ENCODE measurements at regions of chr4 and their contacts with region 1.

Region 1: DNA sequence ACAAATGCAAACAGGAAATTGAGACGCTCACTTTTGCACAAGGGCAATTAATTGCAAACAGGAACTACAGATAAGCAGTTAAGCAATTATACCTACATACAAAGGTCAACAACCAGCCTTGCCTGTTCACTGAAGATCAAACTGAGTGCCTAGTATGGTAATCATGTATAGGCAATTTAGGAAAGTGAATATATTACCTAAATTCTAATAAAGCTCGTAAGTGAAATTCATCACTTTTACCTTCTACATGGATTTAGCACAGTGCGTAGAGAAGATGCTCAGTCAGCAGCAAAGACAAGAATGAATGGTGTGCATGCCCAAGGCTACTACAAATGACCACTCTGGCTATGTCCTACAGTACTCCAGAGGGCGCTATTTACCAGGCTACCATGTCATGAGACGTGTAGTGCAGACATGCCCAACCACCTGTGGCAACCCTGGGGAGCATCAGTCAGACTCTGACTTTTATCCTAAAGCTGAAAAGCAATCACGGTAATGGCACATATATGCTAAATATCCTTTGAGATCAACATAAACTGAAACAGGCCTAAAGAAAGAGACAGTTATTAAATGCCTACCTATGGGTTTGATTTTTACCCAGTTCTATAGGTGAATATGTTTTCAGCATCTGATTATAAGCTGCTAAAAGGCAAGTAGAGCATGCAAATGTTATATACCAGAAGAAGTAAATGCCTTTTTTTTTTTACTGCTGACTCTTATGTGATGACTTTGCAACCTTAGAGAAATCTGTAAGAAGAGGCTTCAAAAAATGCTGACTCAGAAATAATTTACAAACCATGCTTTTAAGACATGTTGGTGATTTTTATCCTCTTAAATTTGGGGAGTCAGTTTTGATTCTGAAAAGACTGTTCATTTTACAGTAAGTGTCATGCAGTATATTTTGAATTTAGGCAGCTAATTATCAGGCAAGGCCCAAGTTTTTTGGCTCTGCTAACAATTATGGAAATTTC is 178.0 kb downstream of the PPP3CA start:
- DNase-seq: peak; percentile 28
- CTCF ChIP-seq: peak; percentile 73

Region 2: GRCh38 chr4:101187841-101188240 is 18.5 kb after region 1 on chr4:
- CTCF ChIA-PET with region 1: interaction called, 35 read pairs
- POLR2A ChIA-PET with region 1: no interaction called
- DNase-seq: no peak
- CTCF ChIP-seq: no peak

Region 3: DNA sequence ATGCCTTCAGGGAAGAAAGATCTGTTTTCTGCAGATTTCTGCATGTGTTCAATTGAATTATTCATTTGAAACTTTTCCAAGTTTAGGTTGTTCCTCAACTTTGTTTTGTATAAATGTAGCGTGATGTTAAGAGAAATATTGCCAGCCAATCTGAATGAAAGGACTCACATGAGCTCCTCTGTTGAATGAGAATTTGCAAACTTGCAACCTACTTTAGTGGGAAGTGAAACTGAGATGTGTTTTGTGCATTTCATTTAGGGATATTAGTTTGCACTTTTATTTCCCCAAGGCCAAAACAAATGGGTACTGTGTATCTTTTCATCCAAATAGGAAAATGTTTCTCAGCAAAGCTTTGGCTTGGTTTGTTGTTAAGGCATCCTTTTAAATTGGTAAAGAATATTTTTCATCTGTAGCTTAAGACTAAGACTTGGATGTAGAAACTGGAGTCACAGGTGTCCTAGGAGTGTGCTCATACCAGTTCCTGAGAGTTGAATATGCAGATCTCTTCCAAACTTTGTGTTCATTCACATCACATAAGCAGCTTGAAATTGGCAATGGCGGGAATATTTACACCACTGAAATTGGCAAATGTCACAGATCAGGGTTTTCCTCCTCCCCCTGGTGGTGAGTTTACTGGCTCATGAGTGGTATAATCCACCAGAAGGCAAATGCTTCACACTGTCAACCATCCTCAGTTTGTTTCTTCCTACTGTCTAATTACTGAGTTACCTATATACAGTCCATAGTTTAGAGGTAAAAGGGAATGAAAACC is 427.6 kb after region 1 on chr4:
- CTCF ChIA-PET with region 1: interaction called, 12 read pairs
- POLR2A ChIA-PET with region 1: no interaction called
- DNase-seq: peak; percentile 9
- CTCF ChIP-seq: peak; percentile 21

Region 4: GRCh38 chr4:101730291-101731117 is 561.2 kb after region 1 on chr4:
- CTCF ChIA-PET with region 1: interaction called, 40 read pairs
- POLR2A ChIA-PET with region 1: no interaction called
- DNase-seq: peak; percentile 28
- CTCF ChIP-seq: peak; percentile 73